Activated naive CD4-positive, alpha-beta T cell treated with anti-CD3 and anti-CD28 coated beads, Interleukin-2, amount 10 ng/mL, durations not matched to agents 7 days and 5 days (primary cell): ENCODE measurements at regions of chr6 and their contacts with region 1.

Region 1: DNA sequence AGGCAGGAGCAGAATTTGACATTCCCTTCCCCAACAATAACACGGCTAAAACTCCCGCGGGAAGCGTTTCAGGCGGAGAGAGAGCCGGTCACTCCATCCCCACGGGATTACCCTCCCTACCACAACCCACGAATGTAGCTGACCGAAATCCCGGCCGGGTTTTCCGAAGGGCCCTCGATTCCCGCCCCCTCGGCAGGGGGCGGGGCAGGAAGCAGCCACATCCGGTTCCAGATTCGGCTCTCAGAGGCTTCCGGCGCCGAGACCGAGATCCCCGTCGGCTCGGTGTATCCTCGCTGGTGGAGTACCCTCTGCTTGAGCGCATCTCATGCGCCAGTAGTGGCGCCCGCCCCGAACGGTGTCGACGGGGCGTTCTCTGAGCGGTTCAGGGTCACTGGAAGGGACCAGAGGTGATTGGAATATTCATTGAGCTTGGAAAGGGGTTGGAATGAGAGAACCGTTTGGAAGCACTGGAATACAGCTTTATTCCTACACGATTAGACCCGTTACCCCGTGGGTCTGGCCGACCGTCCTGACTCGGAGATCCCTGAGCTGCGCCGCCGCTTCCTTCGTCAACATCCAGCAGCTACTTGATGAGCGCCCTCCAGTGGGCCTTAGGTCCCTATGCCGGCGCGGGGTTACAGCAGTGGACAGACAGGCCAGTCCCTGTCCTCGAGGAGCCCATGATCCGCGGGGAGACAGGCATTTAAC is 649 bp upstream of the RGL2 start:
- DNase-seq: peak; percentile 96
- H3K4me3 Mint-ChIP-seq: peak overlapping the region; percentile 89
- H3K27ac Mint-ChIP-seq: peak overlapping the region; percentile 100
- H3K4me1 Mint-ChIP-seq: peaks cover 51% of the 10 kb centered on the region
- H3K27me3 Mint-ChIP-seq: peaks cover 11% of the 10 kb centered on the region

Region 2: DNA sequence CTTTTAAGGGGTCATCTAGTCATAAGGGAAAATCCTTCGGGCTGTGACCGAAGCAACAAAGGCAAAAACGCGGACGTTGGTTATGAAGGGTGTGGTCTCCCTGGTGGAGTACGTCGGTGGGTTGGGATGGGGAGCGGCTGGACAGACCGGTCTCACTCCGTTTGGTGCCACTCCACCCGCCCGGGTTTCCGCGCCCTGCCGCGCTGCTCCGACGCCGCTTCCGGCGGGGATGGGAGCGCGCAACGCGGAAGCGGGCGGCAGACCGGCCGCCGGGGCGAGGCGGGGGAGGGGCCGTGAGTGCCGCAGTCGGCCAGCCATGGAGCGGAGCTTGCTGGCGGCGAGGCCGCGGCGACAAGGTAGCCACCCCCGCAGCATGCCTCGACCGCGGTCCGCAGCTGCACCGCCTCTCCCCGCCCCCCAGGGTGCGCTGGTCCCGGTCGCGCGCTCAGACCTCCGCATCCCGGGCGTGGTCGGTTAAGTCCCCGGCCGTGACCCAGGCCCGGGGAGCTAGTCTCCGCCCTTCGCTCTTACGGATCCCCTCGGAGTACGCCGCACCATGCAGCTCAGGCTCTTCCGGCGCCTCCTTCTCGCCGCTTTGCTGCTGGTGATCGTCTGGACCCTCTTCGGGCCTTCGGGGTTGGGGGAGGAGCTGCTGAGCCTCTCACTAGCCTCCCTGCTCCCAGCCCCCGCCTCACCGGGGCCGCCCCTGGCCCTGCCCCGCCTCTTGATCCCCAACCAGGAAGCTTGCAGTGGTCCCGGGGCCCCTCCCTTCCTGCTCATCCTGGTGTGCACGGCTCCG is 22.3 kb before region 1 on chr6 and contains the start of gene B3GALT4:
- CTCF ChIA-PET with region 1: interaction called, 11 read pairs
- DNase-seq: peak; percentile 85
- H3K4me3 Mint-ChIP-seq: peak within 1 kb of the TSS; percentile 91
- H3K27ac Mint-ChIP-seq: peak within 1 kb of the TSS; percentile 97
- H3K4me1 Mint-ChIP-seq: peaks cover 78% of the 10 kb centered on the region
- H3K27me3 Mint-ChIP-seq: peaks cover 4% of the 10 kb centered on the region

Region 3: GRCh38 chr6:33317669-33318425 is 18.5 kb after region 1 on chr6 and contains the start of gene ZBTB22:
- CTCF ChIA-PET with region 1: interaction called, 32 read pairs
- DNase-seq: peak; percentile 98
- H3K4me3 Mint-ChIP-seq: peak within 1 kb of the TSS; percentile 99
- H3K27ac Mint-ChIP-seq: peak within 1 kb of the TSS; percentile 96
- H3K4me1 Mint-ChIP-seq: peaks cover 82% of the 10 kb centered on the region
- H3K27me3 Mint-ChIP-seq: peaks cover 3% of the 10 kb centered on the region

Region 4: DNA sequence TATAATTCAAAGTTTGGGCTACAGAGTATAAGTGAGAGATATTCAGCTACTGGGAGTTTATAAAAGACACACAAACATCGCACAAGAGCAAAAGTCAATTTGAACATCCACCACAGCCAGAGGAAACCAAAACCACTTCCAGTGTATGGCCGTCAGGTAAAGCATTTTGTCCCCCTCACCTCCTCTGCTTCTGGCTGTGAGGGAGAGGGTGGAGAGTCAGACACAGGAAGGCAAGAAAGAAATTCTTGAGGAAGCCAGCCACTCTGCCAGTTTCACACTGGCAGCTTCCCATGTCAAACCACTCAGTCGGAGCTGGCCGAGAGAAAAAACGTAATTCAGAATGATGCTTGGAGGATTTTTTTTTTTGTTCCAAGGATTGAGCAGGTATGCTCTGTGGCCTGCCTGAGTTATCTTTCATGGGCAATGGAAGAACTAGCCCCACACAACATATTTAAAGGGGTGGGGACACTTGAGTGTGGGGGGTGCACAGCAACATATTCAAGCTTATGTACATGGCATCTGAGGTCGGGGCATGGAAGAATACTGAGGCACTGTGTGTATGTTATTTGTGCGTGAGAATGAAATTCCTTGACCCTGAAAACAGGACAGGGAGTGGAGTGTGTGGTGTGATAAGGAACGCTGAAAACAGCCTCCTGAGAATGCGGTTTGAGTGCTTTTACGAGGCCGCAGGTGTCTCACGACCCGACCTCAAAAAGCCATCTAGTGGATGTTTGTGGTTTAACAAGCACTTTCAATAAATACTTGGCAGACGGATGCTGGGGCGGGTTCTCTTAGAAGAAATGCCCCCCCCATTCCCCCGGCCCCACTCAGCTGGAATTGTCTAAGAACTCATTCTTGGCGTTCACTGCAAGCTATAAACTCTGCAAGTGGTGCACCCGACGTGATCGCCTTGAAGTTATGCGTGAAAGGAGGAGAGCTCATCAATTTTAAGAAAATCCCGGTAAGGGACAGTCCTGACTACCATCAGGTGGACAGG is 45.6 kb after region 1 on chr6:
- CTCF ChIA-PET with region 1: interaction called, 10 read pairs
- DNase-seq: peak; percentile 79
- H3K4me3 Mint-ChIP-seq: peak overlapping the region; percentile 63
- H3K27ac Mint-ChIP-seq: peak overlapping the region; percentile 94
- H3K4me1 Mint-ChIP-seq: peaks cover 57% of the 10 kb centered on the region
- H3K27me3 Mint-ChIP-seq: no peaks in the 10 kb centered on the region